ENCODE measurements at regions of chr10 and their contacts with region 1.

Region 1: GRCh38 chr10:73534857-73535256 is 39.0 kb upstream of the PPP3CB start:
- DNase-seq: no peak
- H3K4me3 ChIP-seq: no peak overlapping the region
- CTCF ChIP-seq: no peak
- POLR2A ChIP-seq: no peak

Region 2: GRCh38 chr10:73586583-73586984 is 51.7 kb after region 1 on chr10:
- intact Hi-C with region 1: no loop called
- DNase-seq: peak in 1 of 2 donors; percentile 38
- H3K4me3 ChIP-seq: no peak overlapping the region
- CTCF ChIP-seq: no peak
- POLR2A ChIP-seq: no peak

Region 3: GRCh38 chr10:73625884-73626752 is 91.3 kb after region 1 on chr10:
- intact Hi-C with region 1: loop called (anchors 5 kb)
- DNase-seq: peak; percentile 95 to 98
- H3K4me3 ChIP-seq: peak overlapping the region; percentile 87
- CTCF ChIP-seq: no peak
- POLR2A ChIP-seq: peak in 1 of 2 donors; percentile 12

Region 4: DNA sequence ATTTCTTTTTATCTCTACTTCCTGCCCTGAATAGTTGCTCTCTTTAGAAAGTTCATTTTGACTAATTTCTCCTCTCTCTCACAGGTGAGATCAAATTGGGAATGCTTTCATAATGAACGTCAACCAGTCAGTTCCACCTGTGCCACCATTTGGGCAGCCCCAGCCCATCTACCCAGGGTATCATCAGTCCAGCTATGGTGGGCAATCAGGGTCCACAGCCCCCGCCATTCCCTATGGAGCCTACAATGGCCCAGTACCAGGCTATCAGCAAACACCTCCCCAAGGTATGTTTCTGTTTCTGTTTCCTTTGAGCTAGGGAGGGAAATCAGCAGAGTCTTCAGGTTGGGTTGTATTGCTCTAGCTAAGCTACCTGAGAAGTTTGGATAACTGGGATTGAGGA is 211.9 kb after region 1 on chr10:
- intact Hi-C with region 1: no loop called
- DNase-seq: no peak
- H3K4me3 ChIP-seq: no peak overlapping the region
- CTCF ChIP-seq: no peak
- POLR2A ChIP-seq: no peak